Activated naive CD8-positive, alpha-beta T cell treated with anti-CD3 and anti-CD28 coated beads, Interleukin-2, amount 10 ng/mL, durations not matched to agents 7 days and 5 days (primary cell): ENCODE measurements at regions of chr12 and their contacts with region 1.

Region 1: GRCh38 chr12:121668750-121669520 is 519 bp downstream of the MORN3 start:
- DNase-seq: peak; percentile 63
- ATAC-seq: no peak
- H3K4me3 Mint-ChIP-seq: no peak overlapping the region
- H3K27ac Mint-ChIP-seq: peak overlapping the region; percentile 9
- H3K4me1 Mint-ChIP-seq: peaks cover 49% of the 10 kb centered on the region
- H3K27me3 Mint-ChIP-seq: no peaks in the 10 kb centered on the region

Region 2: GRCh38 chr12:121550974-121551634 is 117.8 kb before region 1 on chr12:
- POLR2A ChIA-PET with region 1: interaction called, 13 read pairs
- DNase-seq: no peak
- ATAC-seq: no peak
- H3K4me3 Mint-ChIP-seq: no peak overlapping the region
- H3K27ac Mint-ChIP-seq: no peak overlapping the region
- H3K4me1 Mint-ChIP-seq: peaks cover 12% of the 10 kb centered on the region
- H3K27me3 Mint-ChIP-seq: no peaks in the 10 kb centered on the region

Region 3: DNA sequence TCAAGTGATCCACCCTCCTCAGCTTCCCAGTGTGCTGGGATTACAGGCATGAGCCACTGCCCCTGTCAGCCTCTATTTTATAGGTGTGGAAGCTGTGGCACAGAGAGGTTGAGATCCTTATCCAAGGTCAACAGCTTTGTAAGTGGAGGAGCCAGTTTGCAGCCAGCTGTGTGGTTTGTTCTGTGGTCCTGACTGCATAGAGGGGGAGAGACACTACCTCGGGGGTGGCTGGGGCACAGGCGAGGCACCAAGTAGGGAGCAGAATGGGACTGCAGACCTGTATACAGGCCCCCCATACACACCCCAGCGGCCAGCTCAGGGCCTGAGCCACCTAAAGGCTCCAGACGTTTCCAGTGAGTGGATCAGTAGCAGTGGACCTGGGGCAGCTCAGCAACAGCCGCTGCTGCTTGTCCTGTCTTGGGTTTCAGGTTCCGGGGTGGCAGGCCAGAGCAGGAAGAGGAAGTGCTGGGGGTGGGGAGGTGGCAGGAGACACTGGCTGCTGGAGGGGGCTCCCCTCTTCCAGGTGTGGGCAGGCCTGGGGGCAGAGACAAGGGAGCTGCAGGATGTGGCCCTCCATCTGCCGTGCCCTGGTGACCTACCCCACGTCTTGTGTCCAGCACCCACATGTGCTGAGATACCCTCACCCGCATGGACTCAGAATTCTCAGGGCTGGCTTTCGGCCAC is 31.6 kb before region 1 on chr12:
- POLR2A ChIA-PET with region 1: interaction called, 33 read pairs
- DNase-seq: peak; percentile 76
- ATAC-seq: peak; percentile 87
- H3K4me3 Mint-ChIP-seq: peak overlapping the region; percentile 66
- H3K27ac Mint-ChIP-seq: peak overlapping the region; percentile 94
- H3K4me1 Mint-ChIP-seq: peaks cover 45% of the 10 kb centered on the region
- H3K27me3 Mint-ChIP-seq: no peaks in the 10 kb centered on the region

Region 4: DNA sequence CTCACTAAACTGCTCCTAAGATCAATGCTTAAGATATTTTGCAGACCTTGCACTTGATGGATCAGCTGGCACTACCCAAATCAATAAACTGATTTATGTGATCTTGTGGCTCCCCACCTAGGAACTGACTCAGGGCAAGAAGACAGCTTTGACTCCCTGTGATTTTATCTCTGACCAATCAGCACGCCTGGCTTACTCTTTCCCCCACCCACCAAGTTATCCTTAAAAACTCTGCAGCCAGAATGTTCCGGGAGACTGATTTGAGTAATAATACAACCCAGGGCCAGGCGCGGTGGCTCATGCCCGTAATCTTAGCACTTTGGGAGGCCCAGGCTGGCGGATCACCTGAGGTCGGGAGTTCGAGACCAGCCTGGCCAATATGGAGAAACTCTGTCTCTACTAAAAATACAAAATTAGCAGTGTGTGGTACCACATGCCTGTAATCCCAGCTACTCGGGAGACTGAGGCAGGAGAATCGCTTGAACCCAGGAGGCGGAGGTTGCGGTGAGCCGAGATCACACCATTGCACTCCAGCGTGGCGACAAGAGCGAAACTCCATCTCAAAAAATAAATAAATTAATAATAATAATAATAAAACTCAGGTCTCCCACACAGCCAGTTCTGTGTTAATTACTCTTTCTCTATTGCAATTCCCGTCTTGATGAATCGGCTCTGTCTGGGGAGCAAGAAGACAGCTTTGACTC is 11.5 kb before region 1 on chr12:
- POLR2A ChIA-PET with region 1: interaction called, 18 read pairs
- DNase-seq: no peak
- ATAC-seq: no peak
- H3K4me3 Mint-ChIP-seq: no peak overlapping the region
- H3K27ac Mint-ChIP-seq: peak overlapping the region; percentile 57
- H3K4me1 Mint-ChIP-seq: peaks cover 50% of the 10 kb centered on the region
- H3K27me3 Mint-ChIP-seq: no peaks in the 10 kb centered on the region

Region 5: DNA sequence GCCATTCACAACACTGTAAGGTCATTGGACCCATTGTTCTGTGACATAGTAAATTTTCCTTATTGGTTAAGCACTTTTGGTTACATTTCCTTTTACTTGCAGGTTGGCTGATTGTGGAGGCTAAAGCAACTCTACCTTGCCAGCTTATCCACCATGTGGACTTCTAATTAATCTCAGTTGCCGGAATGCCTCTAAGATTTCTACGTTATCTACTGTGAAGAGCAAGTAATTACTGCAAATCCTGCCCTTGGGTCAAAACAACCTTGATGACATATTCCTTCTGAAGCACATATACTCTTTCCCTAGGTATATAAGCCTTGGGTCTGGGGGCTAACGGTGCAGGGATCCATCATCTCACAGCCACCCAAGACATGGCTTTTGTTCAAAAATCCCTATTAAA is 20.0 kb after region 1 on chr12:
- POLR2A ChIA-PET with region 1: interaction called, 11 read pairs
- DNase-seq: no peak
- ATAC-seq: no peak
- H3K4me3 Mint-ChIP-seq: no peak overlapping the region
- H3K27ac Mint-ChIP-seq: no peak overlapping the region
- H3K4me1 Mint-ChIP-seq: peaks cover 2% of the 10 kb centered on the region
- H3K27me3 Mint-ChIP-seq: no peaks in the 10 kb centered on the region